Left cardiac atrium (tissue), 4 donors: ENCODE measurements at regions of chr1 and their contacts with region 1.

Region 1: DNA sequence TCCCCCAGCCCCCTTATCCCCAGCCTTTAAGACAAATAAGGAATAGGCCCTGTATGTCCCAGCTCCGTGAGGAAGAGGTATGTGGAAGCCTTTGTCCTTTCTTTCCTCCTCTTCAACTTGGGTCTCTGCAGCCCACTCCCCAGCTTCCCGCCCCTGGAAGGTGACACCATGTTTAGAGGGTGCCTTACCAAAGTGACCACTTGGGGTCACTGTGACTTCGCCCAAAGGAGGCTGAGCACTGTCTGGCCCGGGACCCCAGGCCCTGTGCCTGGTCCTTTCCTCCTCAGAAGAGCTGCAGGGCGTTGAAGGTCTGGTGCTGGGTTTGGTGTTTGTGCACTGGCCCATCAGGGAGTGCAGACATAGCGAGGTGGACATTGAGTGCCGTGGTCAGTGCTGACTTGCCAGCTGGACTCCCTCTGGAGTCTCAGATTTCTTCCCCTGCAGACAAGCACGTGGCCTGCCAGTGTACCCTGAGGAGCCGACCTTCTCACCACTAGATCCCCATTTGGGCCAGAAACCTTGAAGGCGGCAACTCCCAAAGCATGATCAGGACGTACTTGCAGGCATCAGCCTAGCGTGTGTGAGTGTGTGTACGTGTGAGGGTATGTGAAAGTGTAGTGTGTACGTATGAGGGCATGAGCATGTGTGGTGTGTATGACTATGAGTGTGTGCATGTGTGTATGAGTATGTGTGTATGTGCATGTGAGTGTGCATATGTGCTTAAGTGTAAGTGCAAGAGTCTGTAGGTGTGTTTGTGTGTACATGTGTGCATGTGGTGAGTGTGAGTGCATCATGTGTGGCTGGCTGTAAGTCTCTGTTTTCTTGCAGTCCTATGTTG is 181.4 kb upstream of the KIAA0040 start:
- DNase-seq: no peak
- ATAC-seq: peak; percentile 57 to 59

Region 2: GRCh38 chr1:175331891-175332290 is 42.1 kb before region 1 on chr1:
- intact Hi-C with region 1: no loop called
- DNase-seq: no peak
- ATAC-seq: no peak

Region 3: GRCh38 chr1:175887981-175888433 is 514.0 kb after region 1 on chr1:
- intact Hi-C with region 1: loop called in 1 of 2 experiments (anchors 10 kb)
- DNase-seq: peak; percentile 65
- ATAC-seq: peak; percentile 90 to 91

Region 4: DNA sequence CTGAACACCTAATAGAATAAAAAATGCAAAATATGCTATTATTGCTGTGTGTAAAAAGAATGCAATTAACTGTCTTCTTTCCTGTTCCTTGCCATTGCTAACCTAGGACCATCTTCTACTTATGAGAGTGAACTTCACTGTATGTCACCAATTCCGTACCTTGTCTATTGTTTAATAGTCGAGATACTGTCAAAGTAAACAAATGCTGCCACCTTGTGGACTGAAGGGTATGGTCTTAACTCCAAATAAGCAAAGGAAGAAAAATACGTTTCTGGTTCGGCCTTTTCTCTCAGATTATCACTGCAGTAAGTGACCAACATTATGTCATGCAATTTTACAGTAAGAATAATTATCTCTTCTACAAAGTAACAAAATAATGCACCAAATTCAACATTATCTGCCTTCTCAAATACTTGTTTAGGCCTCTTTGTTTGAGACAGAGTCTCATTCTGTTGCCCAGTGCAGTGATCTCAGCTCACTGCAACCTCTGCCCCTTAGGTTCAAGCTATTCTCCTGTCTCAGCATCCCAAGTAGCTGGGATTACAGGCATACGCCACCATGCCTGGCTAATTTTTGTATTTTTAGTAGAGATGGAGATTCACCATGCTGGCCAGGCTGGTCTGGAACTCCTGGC is 699.6 kb after region 1 on chr1:
- intact Hi-C with region 1: loop called (anchors 5 to 10 kb)
- DNase-seq: no peak
- ATAC-seq: peak; percentile 59 to 65